CD8-positive, alpha-beta memory T cell (primary cell): ENCODE measurements at regions of chr18 and their contacts with region 1.

Region 1: GRCh38 chr18:23640023-23640422 is 22.7 kb downstream of the ANKRD29 start:
- DNase-seq: no peak
- H3K4me3 ChIP-seq: no peak overlapping the region
- H3K4me3 Mint-ChIP-seq: no peak overlapping the region
- H3K27ac ChIP-seq: no peak overlapping the region
- H3K27ac Mint-ChIP-seq: no peak overlapping the region
- H3K4me1 ChIP-seq: no peaks in the 10 kb centered on the region
- H3K4me1 Mint-ChIP-seq: peaks cover 5 to 6% (median 5%) of the 10 kb centered on the region in 3 donors
- H3K27me3 ChIP-seq: no peaks in the 10 kb centered on the region
- H3K27me3 Mint-ChIP-seq: peaks cover 3 to 5% of the 10 kb centered on the region in 2 donors

Region 2: GRCh38 chr18:23743733-23744333 is 103.8 kb after region 1 on chr18:
- CTCF ChIA-PET with region 1: no interaction called
- POLR2A ChIA-PET with region 1: interaction called, 10 read pairs
- DNase-seq: no peak
- H3K4me3 ChIP-seq: no peak overlapping the region
- H3K4me3 Mint-ChIP-seq: no peak overlapping the region
- H3K27ac ChIP-seq: no peak overlapping the region
- H3K27ac Mint-ChIP-seq: no peak overlapping the region
- H3K4me1 ChIP-seq: peaks cover 12% of the 10 kb centered on the region
- H3K4me1 Mint-ChIP-seq: peaks cover 0 to under 1% (median 0%) of the 10 kb centered on the region in 3 donors
- H3K27me3 ChIP-seq: peaks cover 5% of the 10 kb centered on the region
- H3K27me3 Mint-ChIP-seq: peaks cover 12 to 55% of the 10 kb centered on the region in 2 donors